Right ventricle myocardium inferior (tissue), 1 donor: ENCODE measurements at regions of chr9 and their contacts with region 1.

Region 1: DNA sequence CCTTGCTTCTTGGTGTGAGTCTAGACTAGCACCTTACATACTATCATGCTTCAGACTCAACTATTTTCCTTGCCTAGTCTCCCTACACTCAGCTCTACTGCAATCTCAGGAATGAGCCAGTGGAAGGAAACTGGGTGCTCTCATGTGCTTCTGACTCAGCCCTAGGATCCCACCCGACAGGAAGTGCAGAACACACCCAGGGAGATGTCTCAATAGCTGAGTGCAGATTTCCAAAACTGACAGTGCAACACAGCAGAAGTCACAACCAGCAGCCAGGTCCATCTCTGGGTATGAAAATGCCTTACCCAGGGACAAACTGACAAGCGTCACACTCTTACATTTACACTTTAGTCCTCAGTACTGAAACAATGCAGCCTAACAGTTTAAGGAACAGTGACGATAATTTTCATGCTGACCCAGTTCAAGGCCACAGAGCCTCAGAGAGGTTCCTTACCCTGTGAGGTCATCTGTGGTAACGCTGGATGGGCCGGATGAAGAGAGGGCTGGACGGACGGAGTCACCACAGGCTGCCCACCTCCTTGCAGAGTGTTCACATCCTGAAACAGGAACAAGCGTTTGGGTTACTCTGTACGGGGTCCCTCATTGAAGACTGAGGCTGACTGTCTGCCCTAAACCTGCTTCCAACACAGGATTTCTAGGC is 33.0 kb downstream of the FKBP15 start:
- DNase-seq: peak; percentile 75
- ATAC-seq: peak; percentile 82

Region 2: GRCh38 chr9:113210815-113211214 is 22.8 kb after region 1 on chr9:
- intact Hi-C with region 1: loop called (anchors 1 kb)
- DNase-seq: no peak
- ATAC-seq: no peak

Region 3: DNA sequence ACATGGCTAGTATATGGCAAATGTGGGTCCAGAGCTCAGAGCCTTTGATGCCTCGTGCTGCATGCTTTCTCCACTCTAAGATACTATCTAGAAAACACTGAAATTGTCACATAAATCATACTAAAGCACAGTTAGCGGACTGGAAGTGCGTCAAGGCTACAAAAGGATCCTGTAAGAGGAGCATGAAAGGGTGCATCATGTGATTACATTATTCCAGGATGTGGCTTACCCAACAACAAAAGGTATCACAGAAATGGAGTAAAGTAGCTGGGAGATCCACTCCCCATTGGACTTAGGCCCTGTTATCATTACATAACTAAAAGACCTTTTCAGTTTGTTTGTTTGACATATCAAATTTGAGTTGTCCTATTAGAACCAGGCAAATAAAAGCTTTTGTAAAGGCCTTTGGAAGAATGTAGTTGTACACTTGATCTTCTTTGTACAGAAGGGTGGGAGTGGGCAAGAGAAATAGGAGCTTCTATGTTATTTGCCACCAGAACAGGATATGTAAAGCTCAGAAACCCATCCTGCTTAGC is 40.1 kb after region 1 on chr9:
- intact Hi-C with region 1: no loop called
- DNase-seq: no peak
- ATAC-seq: no peak